ENCODE measurements at regions of chr3 and their contacts with region 1.

Region 1: DNA sequence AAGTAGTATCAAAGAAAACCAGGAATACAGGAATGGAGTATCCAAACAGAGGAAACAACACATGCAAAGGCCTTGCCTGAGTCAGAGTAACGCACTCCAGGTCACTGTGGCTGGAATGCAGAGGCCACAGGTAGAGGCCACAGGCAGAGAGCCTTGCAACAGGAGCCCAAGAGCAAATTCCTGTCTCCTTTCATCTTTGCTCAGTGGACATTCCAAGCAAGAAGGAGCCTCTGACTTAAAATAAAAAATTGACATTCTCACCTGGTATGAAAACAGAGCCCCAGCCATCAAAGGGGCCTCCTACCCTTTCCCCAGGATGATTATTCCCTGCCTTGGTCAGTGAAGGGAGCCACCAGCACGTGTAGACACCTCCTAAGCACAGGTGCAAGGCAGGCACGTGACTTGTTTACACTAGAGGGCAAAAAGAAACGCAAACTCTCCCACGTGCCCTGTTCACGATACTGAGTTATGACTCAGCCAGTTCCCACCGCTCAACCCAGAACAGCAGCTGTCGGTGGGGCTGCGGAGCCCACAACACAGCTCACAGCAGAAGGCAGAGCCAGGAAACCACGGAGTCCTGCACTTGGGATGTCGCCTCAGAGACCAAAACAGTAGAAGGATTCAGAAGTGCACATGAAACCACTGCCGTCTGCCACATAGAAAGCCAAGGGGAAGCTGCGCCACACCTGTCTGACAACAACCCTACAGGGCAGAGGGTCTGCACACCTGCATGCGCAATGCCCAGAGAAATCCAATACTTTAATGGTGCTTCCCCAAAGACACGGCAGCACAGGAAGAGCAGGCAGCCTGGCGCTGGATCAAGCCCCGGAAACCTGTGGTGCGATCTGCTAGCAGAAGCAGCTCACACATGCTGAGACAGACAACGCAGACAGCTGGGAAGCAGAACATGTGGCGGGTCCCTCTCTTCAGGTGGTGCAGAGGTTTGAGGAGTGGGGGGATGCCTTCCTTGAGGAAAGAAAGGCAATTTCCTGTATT is 52.1 kb downstream of the ITGB5 start:
- DNase-seq: peak; percentile 85 to 98
- H3K4me3 ChIP-seq: peak overlapping the region; percentile 42; the same call in 1 of the 2 replicates
- H3K27ac ChIP-seq: peak overlapping the region; percentile 99
- H3K4me1 ChIP-seq: peaks cover 79% of the 10 kb centered on the region
- H3K27me3 ChIP-seq: no peaks in the 10 kb centered on the region
- CTCF ChIP-seq: no peak

Region 2: GRCh38 chr3:124812291-124813265 is 22.4 kb before region 1 on chr3:
- CTCF ChIA-PET with region 1: no interaction called
- POLR2A ChIA-PET with region 1: no interaction called
- intact Hi-C with region 1: loop called (anchors 1 kb)
- DNase-seq: peak; percentile 92 to 95
- H3K4me3 ChIP-seq: peak overlapping the region; percentile 35; the same call in 1 of the 2 replicates
- H3K27ac ChIP-seq: peak overlapping the region; percentile 96
- H3K4me1 ChIP-seq: peaks cover 52% of the 10 kb centered on the region
- H3K27me3 ChIP-seq: no peaks in the 10 kb centered on the region
- CTCF ChIP-seq: no peak

Region 3: GRCh38 chr3:124845406-124845805 is 10.4 kb after region 1 on chr3:
- CTCF ChIA-PET with region 1: interaction called, 8 read pairs
- POLR2A ChIA-PET with region 1: interaction called, 6 read pairs
- intact Hi-C with region 1: loop called (anchors 1 kb)
- DNase-seq: peak; percentile 76 to 88
- H3K4me3 ChIP-seq: no peak overlapping the region
- H3K27ac ChIP-seq: peak overlapping the region; percentile 69
- H3K4me1 ChIP-seq: peaks cover 27% of the 10 kb centered on the region
- H3K27me3 ChIP-seq: no peaks in the 10 kb centered on the region
- CTCF ChIP-seq: no peak

Region 4: DNA sequence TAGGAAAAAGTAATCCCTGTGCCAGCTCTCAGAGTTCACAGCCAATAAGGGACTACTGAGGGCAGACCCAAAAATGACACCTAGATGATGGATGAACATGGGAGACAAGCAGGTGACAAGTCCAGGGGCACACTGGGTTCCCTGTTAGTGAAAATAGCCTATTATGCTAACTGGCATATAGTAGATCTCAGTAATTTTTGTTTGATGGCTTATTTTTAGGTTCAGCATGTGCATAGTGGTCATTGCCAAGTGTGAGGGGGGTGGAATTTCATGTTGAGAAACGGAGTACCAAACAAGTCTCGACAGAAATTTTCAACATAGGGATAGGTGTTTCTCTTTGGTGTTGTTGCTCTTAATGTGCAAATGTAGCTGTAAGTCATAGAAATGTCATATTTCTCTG is 58.5 kb after region 1 on chr3:
- CTCF ChIA-PET with region 1: no interaction called
- POLR2A ChIA-PET with region 1: no interaction called
- intact Hi-C with region 1: no loop called
- DNase-seq: no peak
- H3K4me3 ChIP-seq: no peak overlapping the region
- H3K27ac ChIP-seq: no peak overlapping the region
- H3K4me1 ChIP-seq: no peaks in the 10 kb centered on the region
- H3K27me3 ChIP-seq: no peaks in the 10 kb centered on the region
- CTCF ChIP-seq: no peak